ENCODE measurements at regions of chr1 and their contacts with region 1.

Region 1: GRCh38 chr1:54488779-54489626 is 59.0 kb upstream of the ACOT11 start:
- DNase-seq: peak; percentile 91
- ATAC-seq: peak; percentile 80

Region 2: GRCh38 chr1:54125386-54126070 is 363.5 kb before region 1 on chr1:
- intact Hi-C with region 1: loop called (anchors 5 kb)
- DNase-seq: no peak
- ATAC-seq: no peak

Region 3: GRCh38 chr1:54273092-54273794 is 215.8 kb before region 1 on chr1:
- intact Hi-C with region 1: loop called (anchors 10 kb)
- DNase-seq: peak; percentile 81
- ATAC-seq: peak; percentile 82

Region 4: DNA sequence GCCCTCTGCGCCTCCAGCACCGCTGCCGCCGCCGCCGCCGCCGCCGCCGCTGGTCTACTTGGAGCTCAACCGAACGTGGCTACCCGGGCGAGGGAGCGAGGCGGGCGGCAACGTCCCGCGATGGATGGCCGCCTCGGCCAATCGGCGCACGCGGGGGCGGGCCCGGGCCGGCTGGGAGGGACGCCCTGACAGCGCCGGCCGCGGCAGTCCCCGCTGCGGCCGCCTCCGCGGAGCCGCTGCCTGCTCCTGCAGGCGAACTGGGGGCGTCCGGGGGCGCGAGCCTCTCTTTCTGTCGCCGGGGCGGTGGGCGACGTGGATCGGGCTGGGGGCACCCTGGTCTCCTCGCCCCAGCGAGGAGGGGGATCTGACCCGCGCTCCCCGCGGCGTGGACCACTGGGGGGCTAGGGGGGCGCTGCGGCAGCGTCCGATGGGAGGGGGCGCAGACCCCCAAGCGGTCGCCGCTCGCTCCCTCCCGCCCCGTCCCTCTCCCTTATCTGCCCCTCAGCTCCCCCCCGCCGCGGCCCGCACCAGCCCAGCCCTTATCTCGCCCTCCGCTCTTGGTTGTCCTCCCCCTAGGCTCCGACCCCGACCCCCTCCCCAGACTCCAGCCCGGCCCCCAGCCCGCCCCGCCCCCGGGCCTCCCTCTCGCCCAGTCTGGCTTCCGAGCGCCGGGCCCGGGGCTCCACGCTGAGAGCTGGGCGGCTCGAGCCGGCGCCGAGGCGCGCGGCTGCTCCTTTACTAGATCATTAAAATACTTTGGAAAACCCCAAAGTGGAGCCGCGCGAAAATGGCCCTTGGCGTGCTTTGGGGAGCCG is 82.5 kb before region 1 on chr1 and contains the start of gene SSBP3:
- intact Hi-C with region 1: loop called (anchors 2 kb)
- DNase-seq: peak; percentile 94
- ATAC-seq: peak; percentile 91
- total RNA-seq, gene SSBP3: 104 TPM

Region 5: GRCh38 chr1:54415991-54416390 is 73.0 kb before region 1 on chr1:
- intact Hi-C with region 1: loop called (anchors 2 kb)
- DNase-seq: no peak
- ATAC-seq: no peak

Region 6: DNA sequence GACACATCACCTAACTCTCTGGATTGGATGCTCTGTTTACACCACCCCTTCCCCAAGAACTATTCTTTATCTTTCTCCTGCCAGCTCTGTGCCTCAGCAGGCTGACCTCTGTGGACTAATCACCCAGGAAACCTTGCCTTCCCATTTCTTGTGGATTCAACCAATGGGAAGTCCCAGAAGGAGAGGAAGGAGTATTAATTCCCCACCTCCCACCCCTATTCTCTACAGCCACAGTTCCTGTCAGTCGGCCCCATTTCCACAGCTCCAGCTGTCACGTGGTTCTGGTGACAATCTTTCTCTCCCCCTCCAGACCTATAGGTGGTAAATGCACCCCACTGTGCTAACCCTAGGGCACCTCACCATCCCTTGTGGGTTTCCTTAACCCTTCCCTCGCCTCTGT is 36.0 kb before region 1 on chr1:
- intact Hi-C with region 1: no loop called
- DNase-seq: no peak
- ATAC-seq: no peak